PC-3 (cell line): ENCODE measurements at regions of chr1 and their contacts with region 1.

Region 1: GRCh38 chr1:61210435-61211154 is 128.2 kb downstream of the NFIA start:
- DNase-seq: peak; percentile 15
- ATAC-seq: peak; percentile 58
- H3K4me3 ChIP-seq: no peak overlapping the region
- H3K27ac ChIP-seq: no peak overlapping the region
- H3K4me1 ChIP-seq: no peaks in the 10 kb centered on the region
- H3K27me3 ChIP-seq: no peaks in the 10 kb centered on the region
- CTCF ChIP-seq: peak; percentile 41; the same call in 1 of the 2 replicates

Region 2: GRCh38 chr1:60866917-60867531 is 343.6 kb before region 1 on chr1:
- CTCF ChIA-PET with region 1: no interaction called
- POLR2A ChIA-PET with region 1: no interaction called
- intact Hi-C with region 1: no loop called
- DNase-seq: no peak
- ATAC-seq: no peak
- H3K4me3 ChIP-seq: no peak overlapping the region
- H3K27ac ChIP-seq: no peak overlapping the region
- H3K4me1 ChIP-seq: no peaks in the 10 kb centered on the region
- H3K27me3 ChIP-seq: peaks cover 99% of the 10 kb centered on the region
- CTCF ChIP-seq: no peak

Region 3: GRCh38 chr1:61049850-61050540 is 160.6 kb before region 1 on chr1:
- CTCF ChIA-PET with region 1: no interaction called
- POLR2A ChIA-PET with region 1: no interaction called
- intact Hi-C with region 1: loop called (anchors 1 kb)
- DNase-seq: peak; percentile 94
- ATAC-seq: peak; percentile 84
- H3K4me3 ChIP-seq: peak overlapping the region; percentile 87
- H3K27ac ChIP-seq: no peak overlapping the region
- H3K4me1 ChIP-seq: peaks cover 4% of the 10 kb centered on the region; the same call in 1 of the 2 replicates
- H3K27me3 ChIP-seq: no peaks in the 10 kb centered on the region
- CTCF ChIP-seq: peak; percentile 91

Region 4: DNA sequence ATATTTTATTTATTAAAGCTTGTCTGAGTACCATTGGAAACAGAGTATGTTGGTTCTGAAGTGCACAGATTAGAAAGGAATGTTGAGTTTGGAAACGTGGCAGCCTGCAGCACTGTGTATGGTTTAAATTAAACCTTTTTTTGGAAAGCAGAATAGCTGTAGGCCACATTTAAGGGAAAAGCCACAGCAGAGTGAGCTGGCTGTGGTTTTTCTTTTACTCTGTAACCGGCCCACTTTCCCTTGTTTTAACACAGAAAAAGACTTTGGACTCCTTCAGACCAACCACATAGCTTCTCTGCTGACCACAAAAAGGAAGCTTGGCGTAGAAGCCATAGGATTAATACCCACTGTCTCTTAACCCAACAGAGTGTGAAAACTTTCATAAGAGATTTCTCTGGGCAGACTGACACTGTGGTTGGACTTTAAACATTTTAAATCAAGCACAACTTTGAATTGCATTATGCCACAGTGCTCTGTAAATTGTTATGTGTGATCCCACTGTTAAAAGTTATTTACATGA is 53.1 kb before region 1 on chr1:
- CTCF ChIA-PET with region 1: no interaction called
- POLR2A ChIA-PET with region 1: no interaction called
- intact Hi-C with region 1: no loop called
- DNase-seq: no peak
- ATAC-seq: no peak
- H3K4me3 ChIP-seq: no peak overlapping the region
- H3K27ac ChIP-seq: no peak overlapping the region
- H3K4me1 ChIP-seq: 0 out of 2 replicates have a peak, but pooled peaks cover 4% of the 10 kb centered on the region
- H3K27me3 ChIP-seq: no peaks in the 10 kb centered on the region
- CTCF ChIP-seq: no peak

Region 5: GRCh38 chr1:61190618-61191432 is 19.8 kb before region 1 on chr1:
- CTCF ChIA-PET with region 1: no interaction called
- POLR2A ChIA-PET with region 1: no interaction called
- intact Hi-C with region 1: no loop called
- DNase-seq: no peak
- ATAC-seq: no peak
- H3K4me3 ChIP-seq: no peak overlapping the region
- H3K27ac ChIP-seq: no peak overlapping the region
- H3K4me1 ChIP-seq: no peaks in the 10 kb centered on the region
- H3K27me3 ChIP-seq: no peaks in the 10 kb centered on the region
- CTCF ChIP-seq: no peak

Region 6: DNA sequence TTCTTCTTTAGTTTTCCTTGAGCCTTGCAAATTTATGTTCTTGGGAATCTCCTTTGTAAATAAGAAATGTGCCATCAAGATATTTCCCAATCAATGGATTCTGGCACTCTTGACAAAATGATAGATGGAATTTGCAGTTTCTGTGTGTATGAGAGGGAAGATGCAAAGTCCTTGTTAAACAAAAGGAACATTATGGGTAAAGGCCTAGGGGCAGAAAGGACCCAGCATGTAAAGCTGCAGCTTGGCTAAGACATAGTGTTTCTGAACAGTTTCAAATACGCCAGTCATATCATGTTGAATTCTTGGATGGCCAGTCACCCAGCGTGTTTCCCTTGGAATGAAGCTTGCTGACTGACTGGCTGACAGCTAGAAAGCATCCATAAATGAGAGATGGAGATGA is 82.6 kb after region 1 on chr1:
- CTCF ChIA-PET with region 1: no interaction called
- POLR2A ChIA-PET with region 1: no interaction called
- intact Hi-C with region 1: no loop called
- DNase-seq: peak; percentile 46
- ATAC-seq: no peak
- H3K4me3 ChIP-seq: no peak overlapping the region
- H3K27ac ChIP-seq: peak overlapping the region; percentile 80
- H3K4me1 ChIP-seq: peaks cover 47% of the 10 kb centered on the region
- H3K27me3 ChIP-seq: no peaks in the 10 kb centered on the region
- CTCF ChIP-seq: no peak